ENCODE measurements at regions of chr11 and their contacts with region 1.

Region 1: DNA sequence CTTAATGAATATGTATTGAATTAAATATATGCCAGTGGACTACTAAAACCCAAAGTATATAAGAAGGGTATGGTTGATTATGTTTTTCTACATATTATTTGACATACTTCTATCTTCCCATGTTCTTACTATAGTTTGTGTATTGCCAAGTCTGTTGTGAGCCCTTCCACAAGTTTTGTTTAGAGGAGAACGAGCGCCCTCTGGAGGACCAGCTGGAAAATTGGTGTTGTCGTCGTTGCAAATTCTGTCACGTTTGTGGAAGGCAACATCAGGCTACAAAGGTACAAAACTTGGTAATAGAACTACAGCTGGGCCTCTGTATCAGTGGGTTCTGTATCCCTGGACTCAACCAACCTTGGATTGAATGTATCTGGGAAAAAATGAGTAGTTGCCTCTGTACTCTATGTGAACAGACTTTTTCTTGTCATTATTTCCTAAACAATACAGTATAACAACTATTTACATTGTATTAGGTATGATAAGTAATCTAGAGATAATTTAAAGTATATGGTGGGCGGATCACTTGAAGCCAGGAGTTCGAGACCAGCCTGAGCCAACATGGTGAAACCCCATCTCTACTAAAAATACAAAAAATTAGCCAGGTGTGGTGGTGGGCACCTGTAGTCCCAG is 38.7 kb upstream of the TTC36 start:
- DNase-seq: peak; percentile 74
- H3K4me3 ChIP-seq: no peak overlapping the region
- H3K27ac ChIP-seq: no peak overlapping the region
- H3K4me1 ChIP-seq: no peaks in the 10 kb centered on the region
- H3K27me3 ChIP-seq: no peaks in the 10 kb centered on the region
- CTCF ChIP-seq: peak; percentile 62 to 75 (median 72)
- EP300 ChIP-seq: no peak
- POLR2A ChIP-seq: no peak

Region 2: GRCh38 chr11:118145285-118146227 is 343.0 kb before region 1 on chr11:
- intact Hi-C with region 1: loop called (anchors 2 kb)
- DNase-seq: peak; percentile 89
- H3K4me3 ChIP-seq: peak overlapping the region; percentile 44 to 66 (median 60)
- H3K27ac ChIP-seq: peak overlapping the region in 3 of 4 donors; percentile 39 to 58 (median 51)
- H3K4me1 ChIP-seq: peaks cover 0 to 9% (median 7%) of the 10 kb centered on the region in 4 donors
- H3K27me3 ChIP-seq: peaks cover 0 to 43% (median 6%) of the 10 kb centered on the region in 3 donors
- CTCF ChIP-seq: peak; percentile 90 to 97 (median 94)
- EP300 ChIP-seq: no peak
- POLR2A ChIP-seq: no peak

Region 3: DNA sequence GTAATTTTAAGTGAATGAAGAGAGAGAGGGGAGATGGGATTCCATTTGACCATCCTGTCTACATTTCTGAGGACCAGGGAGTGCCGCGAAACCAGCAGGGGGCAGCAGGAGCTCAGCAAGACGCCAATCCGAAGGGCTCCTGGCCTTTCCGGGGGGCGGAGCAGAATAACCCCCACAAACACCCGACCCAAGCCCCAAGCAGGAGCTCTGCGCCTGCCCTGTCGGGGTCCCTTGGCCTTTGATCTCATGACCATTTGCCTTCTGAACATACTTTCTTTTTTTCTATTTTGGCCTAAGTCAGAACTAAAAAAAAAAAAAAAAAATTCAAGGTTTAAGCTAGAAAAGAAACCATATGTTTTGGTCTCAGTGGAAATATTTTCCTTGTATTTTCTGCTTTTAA is 290.2 kb before region 1 on chr11:
- intact Hi-C with region 1: loop called (anchors 5 kb)
- DNase-seq: peak; percentile 87
- H3K4me3 ChIP-seq: peak overlapping the region in 1 of 4 donors; percentile 4
- H3K27ac ChIP-seq: no peak overlapping the region
- H3K4me1 ChIP-seq: peaks cover 0 to 28% (median 20%) of the 10 kb centered on the region in 4 donors
- H3K27me3 ChIP-seq: no peaks in the 10 kb centered on the region
- CTCF ChIP-seq: peak; percentile 57 to 84 (median 80)
- EP300 ChIP-seq: no peak
- POLR2A ChIP-seq: no peak

Region 4: GRCh38 chr11:118401151-118401878 is 87.3 kb before region 1 on chr11 and contains the start of gene ATP5MG:
- intact Hi-C with region 1: loop called (anchors 2 kb)
- DNase-seq: peak; percentile 94
- H3K4me3 ChIP-seq: peak within 1 kb of the TSS; percentile 70 to 94 (median 88)
- H3K27ac ChIP-seq: peak within 1 kb of the TSS; percentile 85 to 89 (median 86)
- H3K4me1 ChIP-seq: peaks cover 0 to 46% (median 36%) of the 10 kb centered on the region in 4 donors
- H3K27me3 ChIP-seq: no peaks in the 10 kb centered on the region
- CTCF ChIP-seq: peak in 2 of 4 experiments; percentile 19 to 24
- EP300 ChIP-seq: no peak
- POLR2A ChIP-seq: peak; percentile 64 to 72
- total RNA-seq, gene ATP5MG: 54.7 to 141 (median 84.8) TPM

Region 5: DNA sequence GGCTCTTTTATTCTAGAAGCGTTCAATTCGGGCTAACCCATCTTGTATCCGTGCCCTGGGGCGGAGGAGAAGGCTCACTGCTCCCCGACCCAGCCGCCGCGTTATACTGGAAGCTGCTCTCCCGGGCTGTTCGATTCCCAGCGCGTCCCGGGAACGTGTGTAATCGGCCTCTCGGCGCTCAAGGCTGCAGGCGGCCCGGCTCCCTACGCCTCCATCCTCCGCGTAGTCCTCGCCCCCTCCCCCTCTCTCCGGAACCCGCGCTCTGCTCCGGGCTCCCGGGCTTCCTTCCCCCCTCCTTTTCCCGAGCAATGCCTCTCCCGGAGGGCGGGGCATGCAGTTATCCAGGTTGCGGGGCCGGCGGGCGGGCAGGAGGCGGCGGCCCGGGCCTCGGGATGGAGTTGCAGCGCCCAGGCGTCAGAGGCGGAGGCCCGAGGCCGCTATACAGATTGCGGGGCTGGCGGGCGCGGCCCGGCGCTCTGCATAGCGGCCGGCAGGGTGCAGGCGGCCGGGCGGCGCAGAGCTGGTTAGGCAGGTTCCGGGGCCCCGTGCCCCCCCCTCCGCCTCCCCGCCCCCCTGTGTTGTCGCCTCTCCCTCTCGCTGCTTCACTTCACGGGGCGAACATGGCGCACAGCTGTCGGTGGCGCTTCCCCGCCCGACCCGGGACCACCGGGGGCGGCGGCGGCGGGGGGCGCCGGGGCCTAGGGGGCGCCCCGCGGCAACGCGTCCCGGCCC is 52.5 kb before region 1 on chr11 and contains the start of gene KMT2A:
- intact Hi-C with region 1: loop called (anchors 5 kb)
- DNase-seq: peak; percentile 99
- H3K4me3 ChIP-seq: peak within 1 kb of the TSS; percentile 88 to 100 (median 98)
- H3K27ac ChIP-seq: peak within 1 kb of the TSS; percentile 93 to 97 (median 95)
- H3K4me1 ChIP-seq: peaks cover 3 to 57% (median 40%) of the 10 kb centered on the region in 4 donors
- H3K27me3 ChIP-seq: no peaks in the 10 kb centered on the region
- CTCF ChIP-seq: peak in 3 of 4 experiments; percentile 67 to 89 (median 72)
- EP300 ChIP-seq: no peak
- POLR2A ChIP-seq: no peak
- total RNA-seq, gene KMT2A: 42.9 to 93.9 (median 62.8) TPM

Region 6: DNA sequence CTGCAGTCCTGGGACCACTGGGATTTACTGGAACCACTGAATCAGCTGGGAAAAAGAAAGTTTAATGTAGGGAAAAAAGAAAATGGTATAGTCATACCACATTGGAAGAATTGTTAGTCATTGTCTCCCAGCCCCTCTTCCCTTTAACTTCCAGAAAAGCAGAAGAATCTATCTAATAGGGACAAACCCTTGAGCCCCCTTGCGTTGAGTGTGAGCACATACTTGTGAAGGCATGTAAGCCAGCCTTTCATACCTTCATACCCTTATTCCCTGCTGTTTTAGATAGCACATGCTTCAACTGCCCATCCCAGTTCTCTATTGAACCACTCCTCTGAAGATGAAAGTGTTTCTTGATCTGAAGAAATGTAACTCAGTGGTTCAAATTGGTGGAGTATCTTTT is 184.3 kb after region 1 on chr11:
- intact Hi-C with region 1: no loop called
- DNase-seq: no peak
- H3K4me3 ChIP-seq: no peak overlapping the region
- H3K27ac ChIP-seq: no peak overlapping the region
- H3K4me1 ChIP-seq: no peaks in the 10 kb centered on the region
- H3K27me3 ChIP-seq: no peaks in the 10 kb centered on the region
- CTCF ChIP-seq: no peak
- EP300 ChIP-seq: no peak
- POLR2A ChIP-seq: no peak

Measured in sigmoid colon (tissue), 7 donors.